ENCODE measurements at regions of chr3 and their contacts with region 1.

Region 1: DNA sequence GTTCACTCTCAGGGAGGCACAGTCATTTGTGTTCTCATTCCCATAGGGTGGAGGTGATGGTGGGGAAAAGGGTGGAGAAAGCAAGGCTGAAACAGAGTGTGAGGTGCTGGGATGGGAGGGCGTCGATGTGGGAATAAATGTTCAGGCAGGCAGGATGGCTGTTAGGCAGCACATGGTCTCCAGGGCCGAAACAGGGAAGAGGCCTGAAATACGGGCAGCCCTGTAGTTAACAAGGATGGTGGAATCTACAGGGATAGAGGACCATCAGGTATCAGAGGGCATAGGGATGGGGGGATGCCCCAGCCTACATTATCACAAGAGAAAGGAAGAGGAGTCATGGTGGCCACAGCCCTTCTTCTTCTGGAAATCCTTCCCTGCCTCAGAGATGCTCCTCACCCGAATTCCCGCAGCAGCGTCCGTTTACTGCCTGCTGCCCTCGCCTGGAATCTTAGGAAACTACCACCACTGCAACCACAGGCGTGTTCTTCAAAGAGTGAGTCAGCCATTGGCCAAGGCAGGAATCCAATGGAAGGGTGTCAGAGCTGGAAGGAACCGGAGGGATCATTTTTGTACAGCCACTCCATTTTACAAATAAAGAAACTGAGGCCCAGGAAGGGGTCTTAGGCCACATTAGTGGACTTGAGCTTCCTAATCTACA is 49.7 kb upstream of the POMGNT2 start:
- DNase-seq: peak; percentile 60
- H3K4me3 ChIP-seq: no peak overlapping the region
- H3K27ac ChIP-seq: no peak overlapping the region
- H3K4me1 ChIP-seq: no peaks in the 10 kb centered on the region
- H3K27me3 ChIP-seq: no peaks in the 10 kb centered on the region
- CTCF ChIP-seq: peak in 2 of 3 experiments; percentile 29 to 35
- POLR2A ChIP-seq: no peak

Region 2: DNA sequence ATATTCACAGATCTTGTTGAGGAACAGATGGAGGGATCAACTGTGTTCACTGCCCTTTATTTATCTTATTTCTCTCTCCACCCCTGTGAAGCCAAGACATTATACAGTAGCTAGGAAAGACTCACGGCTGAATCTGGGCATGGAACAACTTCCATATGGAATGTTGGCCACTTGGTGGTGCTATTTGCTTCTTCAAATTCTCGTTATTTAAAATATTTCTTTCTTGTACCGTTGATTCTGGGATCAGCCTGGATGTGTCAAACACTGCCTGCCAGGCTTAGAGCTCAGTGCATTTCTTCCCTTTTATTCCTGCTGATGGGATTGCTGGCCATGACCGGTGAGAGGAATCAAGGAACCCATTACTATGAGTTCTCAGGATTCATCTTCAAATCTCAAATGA is 194.0 kb before region 1 on chr3:
- intact Hi-C with region 1: loop called (anchors 10 kb)
- DNase-seq: peak; percentile 72
- H3K4me3 ChIP-seq: no peak overlapping the region
- H3K27ac ChIP-seq: no peak overlapping the region
- H3K4me1 ChIP-seq: no peaks in the 10 kb centered on the region
- H3K27me3 ChIP-seq: no peaks in the 10 kb centered on the region
- CTCF ChIP-seq: peak; percentile 50 to 64 (median 62)
- POLR2A ChIP-seq: no peak

Region 3: GRCh38 chr3:43207628-43208085 is 52.1 kb after region 1 on chr3:
- intact Hi-C with region 1: no loop called
- DNase-seq: no peak
- H3K4me3 ChIP-seq: no peak overlapping the region
- H3K27ac ChIP-seq: no peak overlapping the region
- H3K4me1 ChIP-seq: no peaks in the 10 kb centered on the region
- H3K27me3 ChIP-seq: no peaks in the 10 kb centered on the region
- CTCF ChIP-seq: no peak
- POLR2A ChIP-seq: no peak

Region 4: DNA sequence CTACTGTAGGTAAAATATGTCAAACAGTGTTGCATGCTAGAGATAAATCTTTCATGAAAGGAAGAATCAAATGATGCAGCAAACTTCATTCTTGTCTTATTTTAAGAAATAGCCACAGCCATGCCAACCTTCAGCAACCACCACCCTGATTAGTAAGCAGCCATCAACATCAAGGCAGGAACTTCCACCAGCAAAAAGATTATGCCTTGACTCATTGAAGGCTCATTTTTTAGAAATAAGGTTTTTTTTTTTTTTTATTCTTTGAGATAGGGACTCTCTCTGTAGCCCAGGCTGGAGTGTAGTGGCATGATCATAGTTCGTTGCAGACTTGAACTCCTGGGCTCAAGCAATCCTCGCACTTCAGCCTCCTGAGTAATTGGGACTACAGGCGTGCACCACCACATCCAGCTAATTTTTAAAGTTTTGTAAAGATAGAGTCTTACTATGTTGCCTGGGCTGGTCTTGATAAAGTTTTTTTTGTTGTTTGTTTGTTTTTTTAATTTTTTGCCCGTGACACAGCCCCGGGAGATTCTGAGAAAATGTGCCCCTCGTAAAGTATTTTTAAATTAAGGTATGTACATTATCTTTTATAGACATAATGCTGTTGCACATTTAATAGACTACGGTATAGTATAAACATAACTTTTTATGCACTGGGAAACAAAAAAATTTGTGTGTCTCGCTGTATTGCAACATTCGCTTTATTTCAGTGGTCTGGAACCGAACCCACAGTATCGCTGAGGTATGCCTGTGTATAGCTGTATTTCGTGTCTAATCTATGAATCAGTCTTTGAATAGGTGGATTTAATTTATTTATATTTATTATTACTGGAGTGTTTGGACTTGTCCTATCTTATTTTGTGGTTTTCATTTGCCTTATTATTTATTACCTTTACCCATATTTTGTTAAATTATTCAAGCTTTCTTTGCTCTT is 154.0 kb after region 1 on chr3:
- intact Hi-C with region 1: no loop called
- DNase-seq: no peak
- H3K4me3 ChIP-seq: no peak overlapping the region
- H3K27ac ChIP-seq: no peak overlapping the region
- H3K4me1 ChIP-seq: no peaks in the 10 kb centered on the region
- H3K27me3 ChIP-seq: no peaks in the 10 kb centered on the region
- CTCF ChIP-seq: no peak
- POLR2A ChIP-seq: no peak